Endothelial cell of umbilical vein (primary cell): ENCODE measurements at regions of chr14 and their contacts with region 1.

Region 1: DNA sequence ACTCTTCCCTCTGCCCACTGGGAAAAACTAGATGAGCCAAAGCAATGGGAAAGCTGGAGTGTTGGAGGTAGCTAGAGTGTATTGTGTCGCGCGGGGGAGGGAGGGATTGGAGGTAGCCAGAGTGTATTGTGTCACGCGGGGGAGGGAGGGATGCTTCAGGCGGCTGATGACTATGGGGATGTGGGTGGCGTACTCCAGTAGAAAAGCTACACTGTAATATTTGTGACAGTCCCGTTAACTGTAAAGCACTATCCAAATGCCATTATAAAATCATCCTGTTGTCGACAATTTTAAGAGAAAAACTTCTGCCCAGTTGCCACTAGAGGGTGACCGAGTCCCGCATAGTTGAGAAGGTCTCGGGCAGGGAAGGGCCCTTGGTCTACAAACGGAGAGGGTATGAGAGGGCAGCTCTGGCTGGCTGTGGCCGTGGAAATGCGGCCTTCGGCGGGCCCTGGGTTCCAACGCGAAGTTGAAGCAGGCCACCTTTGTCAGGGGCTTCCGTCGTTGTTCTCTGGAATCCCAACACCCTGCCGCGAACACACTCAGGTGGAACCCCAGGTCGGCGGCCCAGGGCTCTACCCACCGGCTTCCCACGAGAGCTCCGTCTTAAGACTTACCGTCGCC is 15.1 kb upstream of the PLEK2 start:
- DNase-seq: peak; percentile 67
- H3K4me3 ChIP-seq: no peak overlapping the region
- H3K27ac ChIP-seq: no peak overlapping the region
- H3K4me1 ChIP-seq: peaks cover 2% of the 10 kb centered on the region
- H3K27me3 ChIP-seq: peaks cover 1 to 2% of the 10 kb centered on the region in 2 experiments
- CTCF ChIP-seq: peak; percentile 73 to 78
- POLR2A ChIP-seq: no peak

Region 2: DNA sequence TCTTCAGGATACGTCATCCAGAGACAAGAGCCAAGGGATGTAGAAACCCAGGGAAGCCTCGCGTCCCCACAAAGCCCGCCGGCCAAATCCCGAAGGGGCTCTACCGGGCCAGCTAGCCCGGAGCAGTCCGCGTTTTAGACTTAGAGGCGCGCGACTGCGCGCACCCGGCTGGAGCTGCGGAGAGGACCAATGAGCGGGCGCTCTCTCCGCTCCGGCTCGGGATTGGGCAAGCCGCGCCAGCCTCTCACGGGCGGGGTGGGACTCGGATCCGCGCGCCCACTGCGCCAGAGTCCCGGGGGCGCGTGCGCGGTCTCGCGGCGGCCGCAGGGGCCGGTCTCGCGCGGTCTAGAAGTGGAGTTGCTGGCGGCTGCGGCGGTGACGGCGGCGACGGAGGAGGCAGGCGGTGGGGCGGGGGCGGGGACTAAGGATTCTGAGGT is 186.1 kb before region 1 on chr14:
- CTCF ChIA-PET with region 1: no interaction called
- POLR2A ChIA-PET with region 1: no interaction called
- dilution Hi-C with region 1: no loop called
- intact Hi-C with region 1: no loop called
- DNase-seq: peak; percentile 99
- H3K4me3 ChIP-seq: peak overlapping the region; percentile 79 to 99 (median 90)
- H3K27ac ChIP-seq: peak overlapping the region; percentile 82
- H3K4me1 ChIP-seq: peaks cover 13% of the 10 kb centered on the region
- H3K27me3 ChIP-seq: peaks cover 0 to 4% of the 10 kb centered on the region in 2 experiments
- CTCF ChIP-seq: no peak
- POLR2A ChIP-seq: peak; percentile 63

Region 3: GRCh38 chr14:67269298-67270061 is 157.6 kb before region 1 on chr14:
- CTCF ChIA-PET with region 1: no interaction called
- POLR2A ChIA-PET with region 1: no interaction called
- dilution Hi-C with region 1: no loop called
- intact Hi-C with region 1: no loop called
- DNase-seq: peak; percentile 30
- H3K4me3 ChIP-seq: no peak overlapping the region
- H3K27ac ChIP-seq: no peak overlapping the region
- H3K4me1 ChIP-seq: peaks cover 10% of the 10 kb centered on the region
- H3K27me3 ChIP-seq: no peaks in the 10 kb centered on the region
- CTCF ChIP-seq: no peak
- POLR2A ChIP-seq: no peak

Region 4: GRCh38 chr14:67335781-67336180 is 91.3 kb before region 1 on chr14:
- CTCF ChIA-PET with region 1: no interaction called
- POLR2A ChIA-PET with region 1: no interaction called
- dilution Hi-C with region 1: no loop called
- intact Hi-C with region 1: no loop called
- DNase-seq: peak; percentile 19
- H3K4me3 ChIP-seq: no peak overlapping the region
- H3K27ac ChIP-seq: no peak overlapping the region
- H3K4me1 ChIP-seq: no peaks in the 10 kb centered on the region
- H3K27me3 ChIP-seq: no peaks in the 10 kb centered on the region
- CTCF ChIP-seq: peak; percentile 19 to 38
- POLR2A ChIP-seq: no peak

Region 5: DNA sequence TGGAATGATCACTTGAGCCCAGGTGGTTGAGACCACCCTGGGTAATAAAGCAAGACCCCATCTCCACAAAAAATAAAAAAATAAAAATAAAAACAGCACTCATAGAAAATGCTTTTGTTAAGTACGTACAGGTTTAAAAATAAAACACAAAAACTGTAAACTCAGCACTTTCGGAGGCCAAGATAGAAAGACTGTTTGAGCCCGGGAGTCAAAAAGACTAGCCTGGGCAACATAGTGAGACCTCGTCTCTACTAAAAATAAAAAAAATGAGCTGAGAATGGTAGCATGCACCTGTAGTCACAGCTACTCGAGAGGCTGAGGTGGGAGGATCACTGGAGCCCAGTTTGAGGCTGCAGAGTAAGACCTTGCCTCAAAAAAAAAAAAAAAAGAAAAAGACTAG is 75.0 kb before region 1 on chr14:
- CTCF ChIA-PET with region 1: no interaction called
- POLR2A ChIA-PET with region 1: no interaction called
- dilution Hi-C with region 1: no loop called
- intact Hi-C with region 1: no loop called
- DNase-seq: no peak
- H3K4me3 ChIP-seq: no peak overlapping the region
- H3K27ac ChIP-seq: no peak overlapping the region
- H3K4me1 ChIP-seq: peaks cover under 1% of the 10 kb centered on the region
- H3K27me3 ChIP-seq: no peaks in the 10 kb centered on the region
- CTCF ChIP-seq: no peak
- POLR2A ChIP-seq: no peak

Region 6: DNA sequence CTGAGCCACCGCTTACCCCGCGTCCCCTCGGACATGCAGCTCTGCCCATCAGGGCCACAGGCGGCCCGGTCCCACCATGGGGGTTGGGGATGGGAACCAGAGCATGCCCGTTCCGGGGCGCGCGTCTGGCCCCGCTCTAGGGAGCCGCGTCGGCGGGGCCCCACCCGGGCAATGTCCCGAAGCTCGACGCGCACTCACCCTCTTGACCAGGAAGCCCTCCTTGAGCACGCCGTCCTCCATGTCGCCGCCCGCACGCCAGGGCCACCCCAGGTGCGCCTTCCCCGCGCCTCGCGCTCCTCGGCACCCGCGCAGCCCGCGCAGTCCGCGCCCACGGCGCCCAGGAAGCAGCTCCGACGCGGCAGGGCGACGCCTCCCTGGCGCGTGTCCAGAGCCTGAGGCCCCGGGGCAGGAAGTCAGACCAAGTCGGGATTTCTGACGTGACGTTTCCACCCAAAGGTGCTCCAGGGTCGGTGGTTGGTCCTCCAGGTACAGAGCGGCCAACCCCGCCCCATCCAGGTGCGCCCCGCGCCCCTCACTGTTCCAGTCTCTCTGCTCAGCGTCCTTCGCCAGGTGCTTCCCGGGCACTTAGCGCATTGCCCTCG is 15.2 kb before region 1 on chr14 and contains the start of gene PLEK2:
- CTCF ChIA-PET with region 1: interaction called, 18 read pairs
- POLR2A ChIA-PET with region 1: no interaction called
- dilution Hi-C with region 1: no loop called
- intact Hi-C with region 1: no loop called
- DNase-seq: no peak
- H3K4me3 ChIP-seq: peak within 1 kb of the TSS in 1 of 3 experiments; percentile 28
- H3K27ac ChIP-seq: no peak within 1 kb of the TSS
- H3K4me1 ChIP-seq: peaks cover 19% of the 10 kb centered on the region
- H3K27me3 ChIP-seq: no peaks in the 10 kb centered on the region
- CTCF ChIP-seq: no peak
- POLR2A ChIP-seq: no peak
- total RNA-seq, gene PLEK2: 3.8 and 4.7 TPM in 2 replicates

Region 7: GRCh38 chr14:67514650-67515385 is 87.7 kb after region 1 on chr14:
- CTCF ChIA-PET with region 1: interaction called, 20 read pairs
- POLR2A ChIA-PET with region 1: no interaction called
- dilution Hi-C with region 1: no loop called
- intact Hi-C with region 1: loop called (anchors 10 kb)
- DNase-seq: peak; percentile 15
- H3K4me3 ChIP-seq: peak overlapping the region; percentile 58 to 81 (median 71)
- H3K27ac ChIP-seq: no peak overlapping the region
- H3K4me1 ChIP-seq: peaks cover 3% of the 10 kb centered on the region
- H3K27me3 ChIP-seq: peaks cover 37 to 64% of the 10 kb centered on the region in 2 experiments
- CTCF ChIP-seq: no peak
- POLR2A ChIP-seq: no peak

Region 8: DNA sequence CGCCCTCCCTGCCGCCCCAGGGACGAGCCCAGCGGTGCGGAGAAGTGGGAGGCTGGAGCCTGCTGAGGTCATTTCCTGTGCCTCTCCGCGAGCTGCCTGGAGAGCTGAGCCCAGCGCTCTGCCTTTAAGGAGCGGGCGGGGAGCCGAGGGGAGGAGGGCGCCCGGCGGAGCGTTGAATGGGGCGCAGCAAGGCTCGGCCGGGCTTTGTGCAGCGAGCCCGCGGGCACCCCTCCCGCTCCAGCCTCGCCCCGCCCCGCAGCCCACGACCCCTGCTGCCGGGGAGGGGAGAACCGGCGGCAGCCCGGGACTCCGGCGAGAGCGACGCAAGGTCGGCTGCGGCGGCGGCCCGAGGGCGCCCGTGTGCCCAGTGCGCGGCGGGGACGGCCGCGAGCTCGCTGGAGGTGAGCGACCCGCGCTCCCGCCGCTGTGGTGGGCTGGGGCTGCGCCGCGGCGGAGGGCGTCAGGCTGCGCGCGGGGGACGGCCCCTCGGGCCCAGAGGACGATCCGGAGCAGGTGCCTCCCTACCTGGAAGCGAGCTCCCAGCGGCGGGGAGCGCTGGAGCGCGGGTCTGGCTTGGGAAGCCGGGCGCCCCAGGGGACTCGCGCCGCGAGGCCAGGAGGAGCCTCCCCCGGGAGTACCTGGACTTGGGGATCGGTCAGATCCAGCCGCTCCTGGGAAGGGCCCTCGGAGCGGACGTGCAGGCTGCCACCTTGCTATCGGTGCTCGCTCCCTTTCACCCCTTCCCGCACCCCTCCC is 106.1 kb after region 1 on chr14 and contains the start of gene PLEKHH1:
- CTCF ChIA-PET with region 1: interaction called, 48 read pairs
- POLR2A ChIA-PET with region 1: no interaction called
- dilution Hi-C with region 1: no loop called
- intact Hi-C with region 1: loop called (anchors 2 kb)
- DNase-seq: peak; percentile 55
- H3K4me3 ChIP-seq: peak within 1 kb of the TSS; percentile 6 to 53 (median 29)
- H3K27ac ChIP-seq: no peak within 1 kb of the TSS
- H3K4me1 ChIP-seq: peaks cover 2% of the 10 kb centered on the region
- H3K27me3 ChIP-seq: peaks cover 18 to 32% of the 10 kb centered on the region in 2 experiments
- CTCF ChIP-seq: no peak
- POLR2A ChIP-seq: no peak
- total RNA-seq, gene PLEKHH1: 0.35 and 0.71 TPM in 2 replicates

Region 9: DNA sequence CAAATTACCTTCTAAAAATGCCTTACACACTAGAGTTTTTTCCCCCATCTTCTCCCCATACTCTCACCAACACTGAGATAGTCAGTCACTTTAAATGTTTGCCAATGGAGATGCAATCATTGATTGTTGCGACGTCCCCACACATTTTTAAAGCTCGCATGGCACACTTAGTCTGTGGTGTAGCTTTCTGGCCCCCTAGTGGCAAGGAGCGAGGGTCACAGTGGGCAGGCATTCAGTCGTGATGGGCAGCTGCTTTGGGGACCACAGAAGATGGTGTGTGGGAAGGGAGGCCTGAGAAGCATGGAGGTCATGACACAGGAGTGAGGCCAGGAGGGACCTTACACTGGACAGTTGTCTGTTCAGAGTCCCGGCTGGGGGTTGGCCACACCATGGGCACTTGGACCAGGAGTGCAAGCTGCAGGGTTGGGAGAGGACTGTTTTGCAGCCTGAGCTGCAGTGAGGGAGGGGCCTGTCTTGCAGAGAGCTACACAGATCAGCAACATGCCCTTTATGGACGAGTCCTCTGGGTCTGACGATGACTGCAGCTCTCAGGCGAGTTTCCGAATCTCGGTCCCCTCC is 144.3 kb after region 1 on chr14:
- CTCF ChIA-PET with region 1: interaction called, 298 read pairs
- POLR2A ChIA-PET with region 1: no interaction called
- dilution Hi-C with region 1: no loop called
- intact Hi-C with region 1: loop called (anchors 1 kb)
- DNase-seq: peak; percentile 54
- H3K4me3 ChIP-seq: no peak overlapping the region
- H3K27ac ChIP-seq: no peak overlapping the region
- H3K4me1 ChIP-seq: no peaks in the 10 kb centered on the region
- H3K27me3 ChIP-seq: peaks cover 0 to 5% of the 10 kb centered on the region in 2 experiments
- CTCF ChIP-seq: peak; percentile 89 to 93
- POLR2A ChIP-seq: no peak

Region 10: GRCh38 chr14:67599698-67600561 is 172.8 kb after region 1 on chr14 and contains the start of gene PIGH:
- CTCF ChIA-PET with region 1: interaction called, 17 read pairs
- POLR2A ChIA-PET with region 1: no interaction called
- dilution Hi-C with region 1: no loop called
- intact Hi-C with region 1: no loop called
- DNase-seq: peak; percentile 88
- H3K4me3 ChIP-seq: peak within 1 kb of the TSS; percentile 33 to 60 (median 54)
- H3K27ac ChIP-seq: no peak within 1 kb of the TSS
- H3K4me1 ChIP-seq: peaks cover 6% of the 10 kb centered on the region
- H3K27me3 ChIP-seq: peaks cover 0 to 4% of the 10 kb centered on the region in 2 experiments
- CTCF ChIP-seq: peak; percentile 41 to 80
- POLR2A ChIP-seq: peak; percentile 80
- total RNA-seq, gene PIGH: 9.9 and 12.3 TPM in 2 replicates

Region 11: GRCh38 chr14:67666750-67667449 is 239.8 kb after region 1 on chr14:
- CTCF ChIA-PET with region 1: interaction called, 19 read pairs
- POLR2A ChIA-PET with region 1: no interaction called
- dilution Hi-C with region 1: no loop called
- intact Hi-C with region 1: loop called (anchors 1 kb)
- DNase-seq: peak; percentile 78
- H3K4me3 ChIP-seq: no peak overlapping the region
- H3K27ac ChIP-seq: no peak overlapping the region
- H3K4me1 ChIP-seq: no peaks in the 10 kb centered on the region
- H3K27me3 ChIP-seq: no peaks in the 10 kb centered on the region
- CTCF ChIP-seq: peak; percentile 39 to 50
- POLR2A ChIP-seq: no peak